Naive thymus-derived CD4-positive, alpha-beta T cell (primary cell): ENCODE measurements at regions of chr3 and their contacts with region 1.

Region 1: DNA sequence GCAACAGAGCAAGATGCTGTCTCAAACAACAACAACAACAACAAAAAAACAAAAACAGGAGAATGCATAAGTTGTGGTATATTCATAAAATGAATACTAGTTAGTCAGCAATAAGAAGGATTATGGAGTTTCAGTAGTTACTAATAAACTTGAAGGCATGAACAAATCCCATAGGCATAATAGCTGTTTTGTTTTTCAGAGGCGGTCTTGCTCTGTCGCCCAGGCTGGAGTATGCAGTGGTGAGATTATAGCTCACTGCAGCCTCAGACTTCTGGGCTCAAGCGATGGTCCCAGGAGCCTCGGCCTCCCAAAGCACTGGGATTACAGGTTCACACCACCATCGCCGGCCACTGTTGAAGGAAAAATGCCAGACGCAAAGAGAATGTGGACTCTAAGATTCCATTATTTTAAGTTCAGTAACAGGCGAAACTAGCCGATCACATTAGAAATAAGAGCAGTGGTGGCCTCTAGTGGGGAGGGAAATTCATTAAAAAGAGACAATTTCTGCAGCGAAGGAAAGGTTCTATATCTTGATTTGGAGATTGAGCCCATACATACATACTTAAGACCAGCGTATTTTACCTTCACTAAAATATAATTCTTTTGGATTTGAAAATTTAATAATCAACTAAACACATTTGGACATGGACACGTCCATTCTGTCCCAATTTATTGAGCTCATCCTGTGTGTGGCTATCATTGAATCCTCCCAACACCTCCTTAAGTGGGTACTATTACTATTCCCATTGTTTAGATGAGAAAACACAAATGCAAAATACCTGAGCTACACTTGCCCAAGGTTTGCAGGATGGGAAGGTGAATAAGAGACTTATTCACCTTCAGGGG is 27.4 kb upstream of the HDAC11 start:
- DNase-seq: peak in 8 of 9 donors; percentile 30 to 70 (median 61)
- ATAC-seq: peak; percentile 55
- H3K4me3 ChIP-seq: peak overlapping the region; percentile 94
- H3K4me3 Mint-ChIP-seq: peak overlapping the region; percentile 79 to 99 (median 97)
- H3K27ac ChIP-seq: peak overlapping the region; percentile 74
- H3K27ac Mint-ChIP-seq: peak overlapping the region in 7 of 9 donors; percentile 49 to 99 (median 97)
- H3K4me1 ChIP-seq: peaks cover 13 to 15% of the 10 kb centered on the region in 2 donors
- H3K4me1 Mint-ChIP-seq: peaks cover 0 to 33% (median 16%) of the 10 kb centered on the region in 7 donors
- H3K27me3 ChIP-seq: no peaks in the 10 kb centered on the region
- H3K27me3 Mint-ChIP-seq: no peaks in the 10 kb centered on the region

Region 2: DNA sequence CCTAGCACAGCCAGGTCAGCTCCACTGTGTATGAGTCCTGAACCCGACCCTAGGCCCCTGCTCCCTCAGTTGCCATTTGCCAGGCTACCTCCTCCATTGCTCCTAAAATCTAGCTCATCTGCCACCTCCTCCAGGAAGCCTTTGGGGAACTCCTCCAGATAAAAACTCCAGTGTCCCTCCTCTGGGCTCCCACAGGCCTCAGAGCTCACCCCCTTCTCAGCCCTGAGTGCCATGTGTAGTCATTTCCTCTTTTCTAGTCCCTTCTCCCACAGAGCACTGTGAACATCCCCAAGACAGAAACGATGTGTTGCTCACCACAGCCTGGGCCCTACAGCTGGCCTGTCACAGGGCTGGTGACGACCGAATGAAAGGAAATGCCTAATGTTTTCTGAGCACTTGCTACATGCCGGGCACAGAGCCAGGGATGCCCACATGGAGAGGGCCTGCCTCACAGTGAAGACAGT is 440.5 kb before region 1 on chr3:
- CTCF ChIA-PET with region 1: interaction called, 3 read pairs
- POLR2A ChIA-PET with region 1: no interaction called
- intact Hi-C with region 1: loop called in 1 of 2 experiments (anchors 10 kb)
- DNase-seq: peak in 2 of 9 donors; percentile 24 to 52
- ATAC-seq: peak; percentile 60
- H3K4me3 ChIP-seq: peak overlapping the region; percentile 38
- H3K4me3 Mint-ChIP-seq: peak overlapping the region; percentile 69 to 96 (median 84)
- H3K27ac ChIP-seq: peak overlapping the region; percentile 99
- H3K27ac Mint-ChIP-seq: peak overlapping the region; percentile 96 to 100 (median 98)
- H3K4me1 ChIP-seq: peaks cover 84 to 90% of the 10 kb centered on the region in 2 donors
- H3K4me1 Mint-ChIP-seq: peaks cover 72 to 92% (median 77%) of the 10 kb centered on the region in 7 donors
- H3K27me3 ChIP-seq: no peaks in the 10 kb centered on the region
- H3K27me3 Mint-ChIP-seq: no peaks in the 10 kb centered on the region

Region 3: DNA sequence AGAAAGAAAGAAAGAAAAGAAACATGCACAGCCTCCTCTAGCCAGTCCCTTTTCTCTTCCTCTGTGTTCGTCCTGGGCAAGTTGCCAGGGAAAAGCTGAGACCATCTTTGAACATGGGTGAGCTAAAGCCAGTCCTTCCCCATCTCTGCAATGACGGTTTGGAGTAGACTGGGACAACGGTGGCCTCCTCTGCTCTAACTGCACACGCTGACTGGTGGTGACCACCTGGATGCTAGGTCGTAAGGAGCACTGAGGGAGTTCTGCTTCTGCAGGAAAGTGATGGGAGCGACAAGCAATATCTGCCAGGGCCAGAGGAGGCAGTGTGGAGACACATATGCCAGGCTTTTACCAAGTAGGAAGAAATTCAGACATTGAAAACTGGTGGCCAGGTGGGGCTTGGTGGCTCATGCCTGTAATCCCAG is 144.3 kb before region 1 on chr3:
- CTCF ChIA-PET with region 1: interaction called, 10 read pairs
- POLR2A ChIA-PET with region 1: no interaction called
- intact Hi-C with region 1: loop called (anchors 1 to 2 kb)
- DNase-seq: peak in 5 of 9 donors; percentile 21 to 40 (median 34)
- ATAC-seq: peak; percentile 68
- H3K4me3 ChIP-seq: no peak overlapping the region
- H3K4me3 Mint-ChIP-seq: no peak overlapping the region
- H3K27ac ChIP-seq: no peak overlapping the region
- H3K27ac Mint-ChIP-seq: peak overlapping the region in 6 of 9 donors; percentile 12 to 82 (median 24)
- H3K4me1 ChIP-seq: no peaks in the 10 kb centered on the region
- H3K4me1 Mint-ChIP-seq: peaks cover 0 to 9% (median 7%) of the 10 kb centered on the region in 7 donors
- H3K27me3 ChIP-seq: no peaks in the 10 kb centered on the region
- H3K27me3 Mint-ChIP-seq: no peaks in the 10 kb centered on the region

Region 4: DNA sequence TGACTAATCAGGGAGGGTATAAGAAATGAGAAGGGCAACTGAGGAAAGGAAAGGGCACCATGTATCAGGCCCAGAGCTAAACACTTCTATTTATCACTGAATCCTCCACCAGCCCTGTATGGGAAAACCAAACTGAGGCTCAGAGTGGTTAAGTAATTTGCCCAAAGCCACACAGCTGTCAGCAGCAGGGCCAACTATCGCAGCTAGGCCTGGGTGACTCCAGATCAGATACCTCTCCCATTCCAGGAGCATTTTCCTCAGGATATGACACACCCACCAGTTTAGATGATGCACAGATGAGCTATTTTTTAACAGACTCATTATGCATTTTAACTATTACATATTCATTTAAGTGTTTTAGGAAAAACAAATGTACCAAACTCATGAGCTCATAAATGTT is 47.1 kb before region 1 on chr3:
- CTCF ChIA-PET with region 1: interaction called, 102 read pairs
- POLR2A ChIA-PET with region 1: interaction called, 4 read pairs
- intact Hi-C with region 1: no loop called
- DNase-seq: no peak
- ATAC-seq: no peak
- H3K4me3 ChIP-seq: no peak overlapping the region
- H3K4me3 Mint-ChIP-seq: no peak overlapping the region
- H3K27ac ChIP-seq: peak overlapping the region; percentile 37
- H3K27ac Mint-ChIP-seq: peak overlapping the region in 8 of 9 donors; percentile 20 to 80 (median 68)
- H3K4me1 ChIP-seq: peaks cover 0 to 8% of the 10 kb centered on the region in 2 donors
- H3K4me1 Mint-ChIP-seq: peaks cover 29 to 70% (median 53%) of the 10 kb centered on the region in 7 donors
- H3K27me3 ChIP-seq: no peaks in the 10 kb centered on the region
- H3K27me3 Mint-ChIP-seq: no peaks in the 10 kb centered on the region

Region 5: GRCh38 chr3:13427662-13428603 is 24.8 kb before region 1 on chr3:
- CTCF ChIA-PET with region 1: interaction called, 32 read pairs
- POLR2A ChIA-PET with region 1: interaction called, 32 read pairs
- intact Hi-C with region 1: loop called in 1 of 2 experiments (anchors 1 kb)
- DNase-seq: peak in 7 of 9 donors; percentile 61 to 73 (median 66)
- ATAC-seq: peak; percentile 95
- H3K4me3 ChIP-seq: peak overlapping the region; percentile 6
- H3K4me3 Mint-ChIP-seq: peak overlapping the region; percentile 22 to 82 (median 68)
- H3K27ac ChIP-seq: peak overlapping the region; percentile 71
- H3K27ac Mint-ChIP-seq: peak overlapping the region; percentile 69 to 98 (median 91)
- H3K4me1 ChIP-seq: peaks cover 10 to 35% of the 10 kb centered on the region in 2 donors
- H3K4me1 Mint-ChIP-seq: peaks cover 18 to 55% (median 42%) of the 10 kb centered on the region in 7 donors
- H3K27me3 ChIP-seq: no peaks in the 10 kb centered on the region
- H3K27me3 Mint-ChIP-seq: no peaks in the 10 kb centered on the region